CD4-positive, alpha-beta memory T cell (primary cell): ENCODE measurements at regions of chr13 and their contacts with region 1.

Region 1: GRCh38 chr13:94014461-94014860 is 465.0 kb downstream of the DCT start:
- DNase-seq: no peak
- H3K4me3 ChIP-seq: no peak overlapping the region
- H3K4me3 Mint-ChIP-seq: no peak overlapping the region
- H3K27ac ChIP-seq: no peak overlapping the region
- H3K27ac Mint-ChIP-seq: no peak overlapping the region
- H3K4me1 ChIP-seq: no peaks in the 10 kb centered on the region
- H3K4me1 Mint-ChIP-seq: no peaks in the 10 kb centered on the region
- H3K27me3 ChIP-seq: no peaks in the 10 kb centered on the region
- H3K27me3 Mint-ChIP-seq: peaks cover 1 to 10% of the 10 kb centered on the region in 2 donors

Region 2: DNA sequence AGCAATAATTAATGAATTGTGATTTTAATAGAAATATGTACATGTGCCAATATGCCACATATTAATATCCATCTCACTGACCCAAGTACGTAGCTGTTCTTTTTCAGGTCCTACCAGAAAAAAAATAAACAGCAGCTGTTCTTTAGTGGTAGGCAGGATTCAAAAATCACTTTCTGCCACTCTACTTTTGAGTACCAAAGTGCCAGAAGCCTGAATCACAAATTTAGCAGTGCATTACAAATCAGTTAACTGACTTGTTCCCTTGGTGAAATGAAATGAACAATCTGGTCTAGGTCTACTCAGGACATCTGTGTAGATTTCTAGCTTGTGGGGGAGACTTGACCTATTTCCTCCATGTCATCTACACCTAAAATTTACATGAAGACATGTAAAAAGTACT is 1563.4 kb before region 1 on chr13:
- CTCF ChIA-PET with region 1: no interaction called
- POLR2A ChIA-PET with region 1: no interaction called
- intact Hi-C with region 1: no loop called
- DNase-seq: no peak
- H3K4me3 ChIP-seq: no peak overlapping the region
- H3K4me3 Mint-ChIP-seq: no peak overlapping the region
- H3K27ac ChIP-seq: no peak overlapping the region
- H3K27ac Mint-ChIP-seq: no peak overlapping the region
- H3K4me1 ChIP-seq: no peaks in the 10 kb centered on the region
- H3K4me1 Mint-ChIP-seq: no peaks in the 10 kb centered on the region
- H3K27me3 ChIP-seq: no peaks in the 10 kb centered on the region
- H3K27me3 Mint-ChIP-seq: no peaks in the 10 kb centered on the region

Region 3: DNA sequence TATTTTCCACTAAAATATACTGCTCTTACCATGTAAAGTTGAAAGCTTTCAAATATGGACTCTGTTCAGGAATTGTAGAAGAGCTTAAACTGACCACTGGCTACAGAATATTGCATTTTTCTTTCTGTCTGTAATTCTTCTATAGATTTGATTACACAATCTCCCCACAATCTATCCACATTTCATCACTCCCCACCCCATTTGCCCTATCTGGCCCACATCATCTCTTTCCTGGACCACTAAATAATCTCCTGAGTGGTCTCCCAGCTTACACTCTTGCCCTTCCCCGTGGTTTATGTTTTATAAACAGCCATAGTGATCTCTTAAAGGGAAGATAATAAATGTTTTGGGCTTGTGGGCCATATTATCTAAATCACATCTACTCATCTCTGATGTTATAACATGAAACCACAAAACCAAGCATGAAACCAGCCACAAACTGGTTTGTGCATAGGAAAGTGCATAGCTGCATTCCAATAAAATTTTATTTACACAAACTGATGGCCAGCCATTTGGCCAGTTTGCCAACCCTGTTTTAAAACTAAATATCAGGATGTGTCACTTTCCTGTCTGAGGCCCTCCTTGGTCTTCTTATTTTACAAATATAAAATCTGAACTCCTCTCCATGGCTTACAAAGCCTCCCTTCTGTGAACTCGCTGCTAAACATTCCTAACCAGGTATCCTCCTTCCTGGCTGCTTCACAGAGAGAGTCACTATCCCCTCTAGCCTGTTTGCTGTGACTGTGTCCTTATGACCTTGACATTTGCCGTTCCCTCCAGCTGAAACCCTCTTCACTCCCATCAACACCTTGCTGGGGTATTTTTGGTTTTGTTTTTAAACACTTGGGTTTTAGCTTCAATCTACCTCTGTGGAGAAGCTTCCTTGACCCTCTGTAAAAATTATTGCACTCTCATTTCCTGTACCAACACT is 287.0 kb before region 1 on chr13:
- CTCF ChIA-PET with region 1: no interaction called
- POLR2A ChIA-PET with region 1: no interaction called
- intact Hi-C with region 1: no loop called
- DNase-seq: no peak
- H3K4me3 ChIP-seq: no peak overlapping the region
- H3K4me3 Mint-ChIP-seq: no peak overlapping the region
- H3K27ac ChIP-seq: no peak overlapping the region
- H3K27ac Mint-ChIP-seq: no peak overlapping the region
- H3K4me1 ChIP-seq: no peaks in the 10 kb centered on the region
- H3K4me1 Mint-ChIP-seq: peaks cover 0 to 10% (median 2%) of the 10 kb centered on the region in 4 donors
- H3K27me3 ChIP-seq: no peaks in the 10 kb centered on the region
- H3K27me3 Mint-ChIP-seq: no peaks in the 10 kb centered on the region

Region 4: DNA sequence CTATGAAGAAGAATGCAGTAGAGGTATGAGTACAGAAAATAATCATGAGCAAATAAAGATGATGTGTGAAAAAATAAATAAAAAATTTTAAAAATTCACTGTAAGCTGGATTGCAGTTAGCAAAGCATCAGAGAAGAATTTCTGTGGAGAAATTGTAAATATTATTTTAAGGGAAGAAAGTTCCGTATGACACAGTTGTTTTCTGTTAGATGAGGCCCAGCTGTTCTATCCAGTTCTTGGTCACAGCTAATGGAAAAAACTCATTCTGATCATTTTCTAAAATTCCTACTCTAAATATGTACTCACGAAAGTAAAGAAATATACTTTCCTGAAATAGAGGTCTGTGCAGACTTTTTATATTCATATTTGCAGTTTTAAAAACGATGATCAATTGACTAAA is 113.7 kb before region 1 on chr13:
- CTCF ChIA-PET with region 1: no interaction called
- POLR2A ChIA-PET with region 1: no interaction called
- intact Hi-C with region 1: no loop called
- DNase-seq: no peak
- H3K4me3 ChIP-seq: no peak overlapping the region
- H3K4me3 Mint-ChIP-seq: no peak overlapping the region
- H3K27ac ChIP-seq: no peak overlapping the region
- H3K27ac Mint-ChIP-seq: no peak overlapping the region
- H3K4me1 ChIP-seq: no peaks in the 10 kb centered on the region
- H3K4me1 Mint-ChIP-seq: no peaks in the 10 kb centered on the region
- H3K27me3 ChIP-seq: no peaks in the 10 kb centered on the region
- H3K27me3 Mint-ChIP-seq: peaks cover 0 to 2% of the 10 kb centered on the region in 2 donors

Region 5: DNA sequence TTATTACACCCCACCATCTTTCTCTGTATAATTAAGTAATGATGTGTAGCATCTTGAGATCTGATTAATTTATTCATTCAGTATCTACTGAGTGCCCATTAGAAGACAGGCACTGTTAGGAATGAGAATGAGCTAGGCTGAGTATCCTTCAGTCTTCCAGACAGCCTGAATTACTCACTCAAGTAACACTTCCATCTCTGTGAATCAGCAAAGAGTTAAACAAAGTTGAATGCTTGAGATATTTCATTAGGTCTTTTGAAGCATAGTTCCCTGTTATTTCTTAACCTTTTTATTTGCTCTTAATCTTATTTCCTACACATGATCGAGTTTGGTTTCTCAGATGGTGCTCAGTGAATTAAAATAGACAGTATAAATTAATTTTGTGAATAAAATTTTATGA is 51.3 kb after region 1 on chr13:
- CTCF ChIA-PET with region 1: no interaction called
- POLR2A ChIA-PET with region 1: no interaction called
- intact Hi-C with region 1: loop called (anchors 2 kb)
- DNase-seq: no peak
- H3K4me3 ChIP-seq: no peak overlapping the region
- H3K4me3 Mint-ChIP-seq: no peak overlapping the region
- H3K27ac ChIP-seq: no peak overlapping the region
- H3K27ac Mint-ChIP-seq: no peak overlapping the region
- H3K4me1 ChIP-seq: no peaks in the 10 kb centered on the region
- H3K4me1 Mint-ChIP-seq: no peaks in the 10 kb centered on the region
- H3K27me3 ChIP-seq: no peaks in the 10 kb centered on the region
- H3K27me3 Mint-ChIP-seq: peaks cover 0 to 7% of the 10 kb centered on the region in 2 donors